Common myeloid progenitor, CD34-positive (primary cell): ENCODE measurements at regions of chr12 and their contacts with region 1.

Region 1: GRCh38 chr12:63450816-63451215 is 217.5 kb downstream of the DPY19L2 start:
- DNase-seq: peak; percentile 38 to 61 (median 55)
- H3K4me3 ChIP-seq: no peak overlapping the region
- H3K27ac ChIP-seq: no peak overlapping the region
- H3K4me1 ChIP-seq: peaks cover 0 to 8% (median 2%) of the 10 kb centered on the region in 4 experiments
- H3K27me3 ChIP-seq: no peaks in the 10 kb centered on the region

Region 2: GRCh38 chr12:63151623-63152320 is 299.0 kb before region 1 on chr12:
- CTCF ChIA-PET with region 1: interaction called, 17 read pairs
- POLR2A ChIA-PET with region 1: no interaction called
- DNase-seq: peak; percentile 78 to 85 (median 85)
- H3K4me3 ChIP-seq: peak overlapping the region in 6 of 7 experiments; percentile 50 to 80 (median 64)
- H3K27ac ChIP-seq: no peak overlapping the region
- H3K4me1 ChIP-seq: peaks cover 2 to 28% (median 21%) of the 10 kb centered on the region in 4 experiments
- H3K27me3 ChIP-seq: peaks cover 13 to 47% (median 33%) of the 10 kb centered on the region in 5 experiments